PC-3 (cell line): ENCODE measurements at regions of chr12 and their contacts with region 1.

Region 1: GRCh38 chr12:42385326-42385841 is 59.4 kb downstream of the PPHLN1 start:
- DNase-seq: no peak
- ATAC-seq: no peak
- H3K4me3 ChIP-seq: no peak overlapping the region
- H3K27ac ChIP-seq: no peak overlapping the region
- H3K4me1 ChIP-seq: no peaks in the 10 kb centered on the region
- H3K27me3 ChIP-seq: no peaks in the 10 kb centered on the region
- CTCF ChIP-seq: no peak

Region 2: DNA sequence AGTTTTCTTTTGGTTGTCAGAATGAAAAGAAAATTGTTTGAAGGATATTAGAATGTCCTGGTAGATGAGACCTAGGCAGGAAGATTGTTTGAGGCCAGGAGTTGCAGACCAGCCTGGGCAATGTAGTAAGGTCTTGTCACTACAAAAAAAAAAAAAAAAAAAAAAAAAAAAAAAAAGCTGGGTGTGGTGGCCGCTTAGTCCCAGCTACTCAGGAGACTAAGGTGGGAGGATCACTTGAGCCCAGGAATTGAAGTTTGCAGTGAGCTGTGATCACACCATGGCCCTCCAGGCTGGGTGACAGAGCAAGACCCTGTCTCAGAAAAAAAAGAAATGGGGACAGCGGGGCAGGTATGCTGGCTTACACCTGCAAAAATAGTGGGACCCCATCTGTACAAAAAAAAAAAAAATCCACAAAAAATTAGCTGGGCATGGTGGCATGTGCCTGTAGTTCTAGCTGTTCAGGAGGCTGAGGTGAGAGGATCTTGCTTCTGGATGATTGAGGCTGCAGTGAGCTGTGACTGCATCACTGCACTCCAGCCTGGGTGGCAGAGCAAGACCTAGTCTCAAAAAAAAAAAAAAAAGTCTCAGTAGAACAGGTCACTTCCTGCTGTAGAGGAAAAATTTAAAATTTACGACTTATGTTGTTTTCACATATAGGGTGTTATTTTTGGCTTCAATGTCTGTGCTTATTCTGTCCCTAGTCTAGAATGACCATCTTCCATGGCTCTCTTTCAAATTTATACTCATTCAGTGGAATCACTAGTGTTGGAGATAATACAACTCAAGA is 11.3 kb after region 1 on chr12:
- CTCF ChIA-PET with region 1: interaction called, 11 read pairs
- POLR2A ChIA-PET with region 1: no interaction called
- intact Hi-C with region 1: no loop called
- DNase-seq: no peak
- ATAC-seq: peak; percentile 22; the same call in 1 of the 2 replicates
- H3K4me3 ChIP-seq: no peak overlapping the region
- H3K27ac ChIP-seq: no peak overlapping the region
- H3K4me1 ChIP-seq: no peaks in the 10 kb centered on the region
- H3K27me3 ChIP-seq: no peaks in the 10 kb centered on the region
- CTCF ChIP-seq: no peak